Endothelial cell of umbilical vein (primary cell): ENCODE measurements at regions of chr1 and their contacts with region 1.

Region 1: GRCh38 chr1:209335178-209335577 is 248.3 kb upstream of the CAMK1G start:
- DNase-seq: peak; percentile 24
- H3K4me3 ChIP-seq: no peak overlapping the region
- H3K27ac ChIP-seq: no peak overlapping the region
- H3K4me1 ChIP-seq: no peaks in the 10 kb centered on the region
- H3K27me3 ChIP-seq: no peaks in the 10 kb centered on the region
- CTCF ChIP-seq: peak; percentile 66 to 81
- POLR2A ChIP-seq: no peak

Region 2: GRCh38 chr1:208122612-208123358 is 1212.4 kb before region 1 on chr1:
- CTCF ChIA-PET with region 1: no interaction called
- POLR2A ChIA-PET with region 1: no interaction called
- dilution Hi-C with region 1: no loop called
- intact Hi-C with region 1: loop called (anchors 5 kb)
- DNase-seq: no peak
- H3K4me3 ChIP-seq: no peak overlapping the region
- H3K27ac ChIP-seq: no peak overlapping the region
- H3K4me1 ChIP-seq: peaks cover 12% of the 10 kb centered on the region
- H3K27me3 ChIP-seq: no peaks in the 10 kb centered on the region
- CTCF ChIP-seq: no peak
- POLR2A ChIP-seq: no peak